T-cell (primary cell): ENCODE measurements at regions of chr11 and their contacts with region 1.

Region 1: DNA sequence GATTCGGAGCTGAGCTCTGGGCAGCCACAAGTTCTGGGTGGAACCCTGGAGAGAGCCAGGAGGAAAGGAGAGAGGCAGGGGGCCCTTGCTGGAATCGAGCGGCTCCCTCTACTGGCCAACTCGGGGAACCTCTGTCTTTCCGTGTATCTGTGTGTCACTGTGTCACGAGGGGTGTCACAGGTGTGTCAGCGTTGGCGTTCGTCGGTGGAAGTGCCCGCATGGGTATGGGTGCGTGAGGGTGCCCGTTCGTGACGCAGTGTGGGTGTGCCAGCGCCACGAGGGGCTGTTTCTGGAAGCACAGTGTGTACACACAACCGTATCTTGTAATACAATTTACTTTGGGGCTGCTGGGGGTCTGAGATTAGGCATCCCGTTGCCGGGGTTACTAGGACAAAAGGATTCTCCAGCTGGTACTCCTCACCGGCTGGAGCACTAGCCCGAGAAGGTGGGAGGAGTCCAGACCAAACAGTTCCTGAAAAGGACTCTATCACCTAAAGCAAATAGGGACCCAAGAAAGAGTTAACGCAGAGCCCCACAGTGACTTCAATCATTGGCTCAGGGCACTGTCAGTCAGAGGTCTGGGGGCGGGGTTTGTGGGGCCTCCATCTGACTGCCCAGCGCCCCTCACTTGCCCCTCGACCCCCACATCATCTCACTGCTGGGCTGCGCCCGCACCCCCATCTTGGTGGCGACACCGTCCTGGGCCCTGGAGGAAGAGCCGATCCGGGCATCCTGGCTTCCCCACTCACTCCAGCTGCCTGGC is 2.6 kb upstream of the BCL9L start:
- DNase-seq: peak; percentile 89 to 99 (median 97)
- ATAC-seq: peak; percentile 58 to 73 (median 64)
- H3K4me3 ChIP-seq: peak overlapping the region; percentile 79 to 86
- H3K4me3 Mint-ChIP-seq: peak overlapping the region; percentile 92 to 94 (median 93)
- H3K27ac ChIP-seq: peak overlapping the region; percentile 99
- H3K27ac Mint-ChIP-seq: peak overlapping the region; percentile 98 to 99
- H3K4me1 ChIP-seq: peaks cover 24 to 56% of the 10 kb centered on the region in 2 experiments
- H3K4me1 Mint-ChIP-seq: peaks cover 41 to 55% (median 50%) of the 10 kb centered on the region in 3 donors
- H3K27me3 ChIP-seq: no peaks in the 10 kb centered on the region
- H3K27me3 Mint-ChIP-seq: no peaks in the 10 kb centered on the region

Region 2: DNA sequence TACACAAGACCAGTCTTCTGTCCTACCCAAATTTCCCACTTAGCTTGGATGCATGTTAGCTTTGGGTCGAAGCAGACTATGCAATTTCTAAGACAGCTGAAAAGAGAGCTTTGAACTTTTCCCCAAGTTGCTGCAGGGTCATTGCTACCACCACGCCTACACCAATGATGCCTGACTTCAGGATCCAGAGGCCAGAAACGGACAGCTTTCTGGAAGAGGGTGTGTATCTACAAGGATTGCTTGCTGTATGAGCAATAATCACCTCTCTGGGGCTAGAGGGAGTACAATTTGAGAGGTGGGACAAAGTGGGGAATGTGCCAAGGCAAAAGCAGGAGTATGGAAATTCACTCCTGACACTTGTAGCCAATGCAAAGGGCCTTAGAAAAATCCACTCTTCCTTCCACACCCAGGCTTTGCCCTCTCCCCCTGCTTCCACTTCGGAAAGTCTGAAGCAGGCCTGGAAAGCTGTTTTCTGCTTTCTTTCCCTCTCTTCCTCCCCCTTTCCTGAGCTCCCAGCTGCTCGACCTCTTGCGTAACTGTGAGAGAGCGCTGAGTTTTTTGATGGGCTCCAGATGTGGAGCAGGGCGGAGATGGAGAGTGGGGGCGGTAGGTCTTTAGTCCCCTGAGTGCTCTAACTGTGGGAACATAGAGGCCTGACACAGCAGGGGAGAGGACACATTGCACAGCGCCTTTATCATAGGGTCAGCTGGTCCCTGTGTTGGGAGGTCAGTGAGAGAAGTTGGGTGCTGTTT is 323.0 kb before region 1 on chr11:
- CTCF ChIA-PET with region 1: no interaction called
- POLR2A ChIA-PET with region 1: interaction called in 1 of 2 experiments, 15 read pairs
- DNase-seq: no peak
- ATAC-seq: no peak
- H3K4me3 ChIP-seq: no peak overlapping the region
- H3K4me3 Mint-ChIP-seq: no peak overlapping the region
- H3K27ac ChIP-seq: no peak overlapping the region
- H3K27ac Mint-ChIP-seq: peak overlapping the region in 1 of 2 donors; percentile 22
- H3K4me1 ChIP-seq: peaks cover 12 to 29% of the 10 kb centered on the region in 2 experiments
- H3K4me1 Mint-ChIP-seq: peaks cover 16 to 25% (median 20%) of the 10 kb centered on the region in 3 donors
- H3K27me3 ChIP-seq: peaks cover 0 to 18% of the 10 kb centered on the region in 2 experiments
- H3K27me3 Mint-ChIP-seq: peaks cover 0 to 10% of the 10 kb centered on the region in 2 donors

Region 3: DNA sequence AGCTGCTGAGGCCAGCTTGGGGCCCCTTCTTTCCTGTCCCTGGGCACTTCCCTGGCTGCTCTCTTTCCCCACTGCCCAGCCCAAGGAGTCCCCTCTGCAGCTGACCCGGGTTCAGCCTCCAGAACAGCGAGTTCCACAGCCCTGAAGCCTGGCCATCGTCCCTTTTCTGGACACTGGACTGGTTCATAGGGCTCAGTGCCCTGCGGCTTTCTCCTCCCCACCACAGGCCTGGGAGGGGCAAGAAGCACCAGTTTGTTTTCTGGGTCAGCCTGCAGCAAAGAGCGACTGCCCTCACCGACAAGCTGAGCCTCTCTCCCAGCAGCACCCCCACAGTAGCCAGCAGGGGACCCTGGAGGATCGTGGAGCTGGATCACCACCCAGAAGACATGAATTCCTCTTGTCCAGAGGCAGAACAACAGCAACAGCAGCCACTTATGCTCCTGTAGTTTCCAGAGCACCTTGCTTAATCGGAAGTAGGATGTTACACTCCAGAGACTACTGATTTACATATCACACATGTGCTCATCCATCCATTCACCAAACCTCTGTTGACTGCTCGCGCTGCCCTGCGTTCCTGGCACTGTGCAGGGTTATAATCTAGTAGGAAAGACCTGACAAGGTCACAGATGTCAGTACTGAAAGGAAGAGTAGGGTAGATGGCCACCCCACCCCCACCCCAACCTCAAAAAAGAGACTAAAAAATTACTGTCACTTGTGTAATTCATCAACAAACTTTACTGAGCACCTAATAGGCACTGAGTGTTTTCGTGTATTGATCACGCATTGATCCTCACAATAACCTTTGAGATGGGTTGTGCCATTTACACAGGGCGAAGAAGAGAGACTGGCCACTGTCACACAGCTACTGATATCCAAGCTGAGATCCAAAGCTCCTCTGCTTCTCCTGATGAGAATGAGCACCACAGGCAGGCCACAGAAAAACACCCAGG is 57.6 kb before region 1 on chr11:
- CTCF ChIA-PET with region 1: interaction called, 5 to 8 read pairs
- POLR2A ChIA-PET with region 1: interaction called in 1 of 2 experiments, 10 read pairs
- DNase-seq: peak in 11 of 35 experiments; percentile 14 to 62 (median 26)
- ATAC-seq: peak; percentile 36 to 60 (median 53)
- H3K4me3 ChIP-seq: peak overlapping the region; percentile 35 to 51
- H3K4me3 Mint-ChIP-seq: peak overlapping the region; percentile 69 to 86 (median 71)
- H3K27ac ChIP-seq: peak overlapping the region; percentile 100
- H3K27ac Mint-ChIP-seq: peak overlapping the region; percentile 95 to 98
- H3K4me1 ChIP-seq: peaks cover 29 to 67% of the 10 kb centered on the region in 2 experiments
- H3K4me1 Mint-ChIP-seq: peaks cover 58 to 64% (median 59%) of the 10 kb centered on the region in 3 donors
- H3K27me3 ChIP-seq: no peaks in the 10 kb centered on the region
- H3K27me3 Mint-ChIP-seq: no peaks in the 10 kb centered on the region

Region 4: GRCh38 chr11:118907051-118908042 is 20.9 kb before region 1 on chr11:
- CTCF ChIA-PET with region 1: interaction called, 12 to 30 read pairs
- POLR2A ChIA-PET with region 1: interaction called, 13 to 18 read pairs
- DNase-seq: peak; percentile 56 to 92 (median 82)
- ATAC-seq: peak; percentile 49 to 56 (median 53)
- H3K4me3 ChIP-seq: no peak overlapping the region
- H3K4me3 Mint-ChIP-seq: peak overlapping the region in 1 of 3 donors; percentile 74
- H3K27ac ChIP-seq: peak overlapping the region; percentile 50
- H3K27ac Mint-ChIP-seq: peak overlapping the region; percentile 87 to 91
- H3K4me1 ChIP-seq: peaks cover 20 to 67% of the 10 kb centered on the region in 2 experiments
- H3K4me1 Mint-ChIP-seq: peaks cover 39 to 53% (median 47%) of the 10 kb centered on the region in 3 donors
- H3K27me3 ChIP-seq: no peaks in the 10 kb centered on the region
- H3K27me3 Mint-ChIP-seq: no peaks in the 10 kb centered on the region

Region 5: DNA sequence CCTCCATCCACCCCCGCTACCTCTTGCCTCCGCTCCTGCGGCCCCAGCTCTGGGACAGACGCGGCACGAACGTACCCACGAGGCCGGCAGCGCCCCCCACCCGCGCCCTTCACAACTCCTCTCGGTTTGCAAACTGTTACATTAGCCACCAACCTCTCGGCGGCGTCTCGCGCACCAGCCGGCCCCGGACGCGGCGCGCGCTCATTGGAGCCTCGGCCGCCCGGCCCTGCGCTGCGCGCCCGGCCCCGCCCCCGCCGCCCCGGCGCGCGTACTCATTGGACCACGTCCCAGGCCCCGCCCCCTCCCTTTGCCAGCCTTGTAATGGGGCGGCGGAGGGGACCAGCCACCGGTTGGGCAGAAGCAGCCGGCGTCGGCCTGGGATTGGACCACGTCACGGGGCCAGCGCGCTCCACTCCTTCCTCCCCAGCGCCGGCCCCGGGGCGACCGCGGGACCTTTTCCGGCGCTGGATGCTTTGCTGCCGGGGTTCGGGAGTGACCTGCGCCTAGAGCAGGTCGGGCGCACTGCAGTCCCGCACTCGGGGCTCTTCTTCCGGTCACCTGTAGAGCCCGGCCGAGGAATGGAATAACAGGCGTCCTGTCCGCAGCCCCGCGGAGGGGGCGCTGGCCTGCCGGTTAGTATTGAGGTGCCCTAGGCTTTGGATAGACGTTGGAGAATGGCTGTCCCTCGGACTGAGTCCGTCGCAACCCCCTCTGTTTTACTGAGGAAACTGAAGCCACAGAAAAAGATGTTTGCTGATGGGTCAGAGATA is 128.9 kb after region 1 on chr11 and contains the start of gene HYOU1:
- CTCF ChIA-PET with region 1: interaction called in 1 of 2 experiments, 12 read pairs
- POLR2A ChIA-PET with region 1: interaction called in 1 of 2 experiments, 4 read pairs
- DNase-seq: peak; percentile 95 to 100 (median 98)
- ATAC-seq: peak; percentile 90 to 97 (median 93)
- H3K4me3 ChIP-seq: peak within 1 kb of the TSS; percentile 77
- H3K4me3 Mint-ChIP-seq: peak within 1 kb of the TSS; percentile 94 to 95 (median 94)
- H3K27ac ChIP-seq: peak within 1 kb of the TSS; percentile 63
- H3K27ac Mint-ChIP-seq: peak within 1 kb of the TSS; percentile 94 to 95
- H3K4me1 ChIP-seq: peaks cover 12 to 28% of the 10 kb centered on the region in 2 experiments
- H3K4me1 Mint-ChIP-seq: peaks cover 34 to 45% (median 36%) of the 10 kb centered on the region in 3 donors
- H3K27me3 ChIP-seq: no peaks in the 10 kb centered on the region
- H3K27me3 Mint-ChIP-seq: no peaks in the 10 kb centered on the region
- total RNA-seq, gene HYOU1: 91.2 to 113 (median 112) TPM